Common myeloid progenitor, CD34-positive (primary cell): ENCODE measurements at regions of chr1 and their contacts with region 1.

Region 1: GRCh38 chr1:175154629-175155472 is 37.7 kb downstream of the KIAA0040 start:
- DNase-seq: peak; percentile 56 to 83 (median 77)
- H3K4me3 ChIP-seq: no peak overlapping the region
- H3K27ac ChIP-seq: no peak overlapping the region
- H3K4me1 ChIP-seq: peaks cover 0 to 9% (median 5%) of the 10 kb centered on the region in 4 experiments
- H3K27me3 ChIP-seq: peaks cover 0 to 28% (median 9%) of the 10 kb centered on the region in 5 experiments

Region 2: GRCh38 chr1:175023043-175023921 is 131.6 kb before region 1 on chr1 and contains the start of gene MRPS14:
- CTCF ChIA-PET with region 1: interaction called, 16 read pairs
- POLR2A ChIA-PET with region 1: no interaction called
- DNase-seq: peak; percentile 99 to 100 (median 100)
- H3K4me3 ChIP-seq: peak within 1 kb of the TSS; percentile 95 to 100 (median 100)
- H3K27ac ChIP-seq: peak within 1 kb of the TSS; percentile 94 to 97
- H3K4me1 ChIP-seq: peaks cover 5 to 13% (median 10%) of the 10 kb centered on the region in 4 experiments
- H3K27me3 ChIP-seq: no peaks in the 10 kb centered on the region

Region 3: GRCh38 chr1:175174309-175175165 is 19.7 kb after region 1 on chr1:
- CTCF ChIA-PET with region 1: interaction called, 16 read pairs
- POLR2A ChIA-PET with region 1: no interaction called
- DNase-seq: no peak
- H3K4me3 ChIP-seq: no peak overlapping the region
- H3K27ac ChIP-seq: no peak overlapping the region
- H3K4me1 ChIP-seq: no peaks in the 10 kb centered on the region
- H3K27me3 ChIP-seq: no peaks in the 10 kb centered on the region

Region 4: DNA sequence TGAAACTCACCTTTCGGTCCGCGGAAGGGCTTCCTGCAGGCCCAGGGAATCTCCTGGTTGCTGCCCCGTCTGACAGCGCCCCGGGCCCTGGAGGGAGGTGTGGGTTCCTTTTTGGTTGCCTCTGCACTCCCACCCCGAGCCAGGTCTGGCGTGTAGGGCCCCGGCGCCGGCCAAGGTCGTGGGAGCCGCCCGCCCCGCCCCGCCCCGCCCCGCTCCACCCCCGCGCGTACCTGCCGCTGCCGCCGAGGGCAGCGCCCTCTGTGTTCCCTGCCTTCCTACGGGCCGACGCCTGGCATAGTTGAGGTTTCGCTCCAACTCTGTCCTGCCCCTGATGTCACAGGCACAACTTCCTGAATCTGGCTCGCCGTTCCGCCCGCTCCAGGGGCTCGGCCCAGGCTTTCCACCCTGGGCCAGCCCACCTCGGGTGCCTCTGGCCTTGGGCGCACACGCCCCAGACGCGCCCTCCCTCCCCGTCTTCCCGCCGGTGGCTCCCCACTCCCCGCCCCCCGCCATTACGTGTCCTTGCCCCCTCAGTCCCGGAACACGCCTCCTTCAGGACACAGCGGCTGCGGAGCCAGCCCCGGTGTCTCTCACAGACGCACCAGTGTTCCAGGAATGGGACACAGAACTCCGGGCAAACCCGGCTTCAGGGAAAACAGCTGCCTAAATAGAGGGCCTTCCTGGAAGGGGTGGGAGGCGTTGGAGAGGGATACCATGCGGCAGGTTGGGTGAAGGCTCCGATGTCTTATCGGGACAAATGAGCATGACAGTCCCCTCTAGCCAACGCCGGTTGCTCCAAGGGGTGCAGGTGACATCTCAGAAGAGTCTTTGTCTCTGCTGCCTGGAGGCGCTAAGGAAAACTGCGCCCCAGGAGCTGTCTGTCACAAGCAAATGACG is 38.0 kb after region 1 on chr1 and contains the start of gene KIAA0040:
- CTCF ChIA-PET with region 1: interaction called, 11 read pairs
- POLR2A ChIA-PET with region 1: interaction called, 3 read pairs
- DNase-seq: peak; percentile 82 to 88 (median 84)
- H3K4me3 ChIP-seq: peak within 1 kb of the TSS; percentile 45 to 94 (median 85)
- H3K27ac ChIP-seq: peak within 1 kb of the TSS; percentile 26 to 72
- H3K4me1 ChIP-seq: peaks cover 25 to 56% (median 48%) of the 10 kb centered on the region in 4 experiments
- H3K27me3 ChIP-seq: no peaks in the 10 kb centered on the region

Region 5: DNA sequence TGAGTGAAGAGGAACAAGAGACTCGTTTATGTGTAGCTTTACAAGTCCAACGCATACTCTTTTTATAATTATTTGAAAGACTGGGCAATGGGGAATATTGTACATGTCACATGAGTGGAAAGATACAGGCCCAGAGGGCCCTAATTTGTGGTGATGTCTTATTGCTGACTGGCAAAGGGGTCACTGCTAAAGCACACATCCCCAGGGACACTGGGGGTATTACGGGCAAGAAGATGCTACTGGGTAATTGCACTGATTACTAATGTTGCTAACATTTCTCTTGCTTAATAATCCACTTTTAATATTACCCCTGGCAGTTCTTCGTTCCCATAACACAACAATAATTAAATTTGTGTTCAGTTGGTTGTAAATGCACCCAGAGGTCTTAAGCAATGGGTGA is 158.1 kb after region 1 on chr1:
- CTCF ChIA-PET with region 1: interaction called, 167 read pairs
- POLR2A ChIA-PET with region 1: no interaction called
- DNase-seq: no peak
- H3K4me3 ChIP-seq: no peak overlapping the region
- H3K27ac ChIP-seq: no peak overlapping the region
- H3K4me1 ChIP-seq: no peaks in the 10 kb centered on the region
- H3K27me3 ChIP-seq: peaks cover 0 to 3% (median 0%) of the 10 kb centered on the region in 5 experiments